ENCODE measurements at regions of chr1 and their contacts with region 1.

Region 1: DNA sequence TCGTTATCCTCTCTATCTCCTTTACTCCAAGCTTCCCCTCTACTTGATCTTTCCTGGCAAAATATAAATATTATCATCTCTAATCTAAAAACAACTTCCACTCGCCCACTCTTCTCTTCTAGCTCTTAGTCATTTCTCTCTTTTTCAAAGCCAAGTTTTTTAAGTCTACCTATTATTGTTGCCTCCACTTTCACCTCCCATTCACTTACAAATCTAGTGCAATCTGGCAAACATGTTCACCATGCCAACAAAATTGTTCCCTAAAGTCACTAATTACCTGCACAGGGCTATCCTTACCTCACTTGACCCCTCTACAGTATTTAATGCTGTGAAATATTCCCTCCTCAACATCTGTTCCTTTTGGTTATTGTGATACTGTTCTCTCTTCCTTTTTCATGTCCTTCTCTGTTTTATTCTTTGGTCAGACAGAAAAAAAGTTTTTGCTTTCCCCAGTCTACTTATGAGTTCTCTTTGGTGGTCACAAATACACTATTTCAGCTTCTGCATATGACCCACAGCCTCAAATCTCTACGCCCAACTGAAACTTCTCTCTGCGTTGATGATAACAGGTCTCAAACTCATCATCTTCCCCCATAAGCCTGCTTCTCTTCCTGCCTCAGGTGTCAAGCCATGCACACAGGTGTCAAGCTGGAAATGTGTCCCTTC is 31.9 kb upstream of the RAP1A start:
- DNase-seq: no peak
- H3K4me3 Mint-ChIP-seq: no peak overlapping the region
- H3K27ac Mint-ChIP-seq: no peak overlapping the region
- H3K4me1 Mint-ChIP-seq: peaks cover 28% of the 10 kb centered on the region
- H3K27me3 Mint-ChIP-seq: no peaks in the 10 kb centered on the region

Region 2: DNA sequence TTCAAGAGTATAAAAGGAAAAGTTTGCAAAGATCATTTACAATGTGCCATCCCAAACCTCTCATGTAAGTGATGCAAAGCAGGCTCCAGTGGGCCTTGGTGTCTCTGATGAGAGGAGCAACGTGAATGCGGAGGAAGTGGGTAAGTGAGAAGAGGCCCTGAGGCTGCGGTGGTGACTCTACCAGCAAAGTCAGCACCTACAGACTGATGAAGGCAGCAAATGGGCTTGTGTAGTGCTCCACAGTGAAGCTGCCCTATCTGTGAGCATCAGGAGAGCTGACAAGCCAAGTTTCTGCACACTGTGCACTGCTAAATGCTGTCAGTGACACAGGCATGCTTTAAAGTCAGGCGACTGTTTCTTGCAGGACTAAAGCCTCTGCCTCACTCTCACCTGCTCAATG is 16.3 kb after region 1 on chr1:
- intact Hi-C with region 1: loop called (anchors 2 kb)
- DNase-seq: peak; percentile 82
- H3K4me3 Mint-ChIP-seq: peak overlapping the region; percentile 66
- H3K27ac Mint-ChIP-seq: peak overlapping the region; percentile 97
- H3K4me1 Mint-ChIP-seq: peaks cover 70% of the 10 kb centered on the region
- H3K27me3 Mint-ChIP-seq: no peaks in the 10 kb centered on the region

Measured in activated T-helper 2 cell treated with anti-CD3 and anti-CD28 coated beads, Interferon-gamma antibody, Interleukin-2, Interleukin-4, amounts not matched to agents 10 μg/mL and 5 μg/mL and 100 μg/mL, durations not matched to agents 14 hours and 24 hours and 36 hours (primary cell).